HepG2 (cell line): ENCODE measurements at regions of chr4 and their contacts with region 1.

Region 1: GRCh38 chr4:103046416-103047290 is 27.1 kb upstream of the SLC9B1 start:
- DNase-seq: peak; percentile 50
- ATAC-seq: peak; percentile 99
- H3K4me3 ChIP-seq: no peak overlapping the region
- H3K27ac ChIP-seq: no peak overlapping the region
- H3K4me1 ChIP-seq: peaks cover 2% of the 10 kb centered on the region
- H3K27me3 ChIP-seq: no peaks in the 10 kb centered on the region
- CTCF ChIP-seq: peak; percentile 72
- EP300 ChIP-seq: no peak
- POLR2A ChIP-seq: no peak
- RAD21 ChIP-seq: peak; percentile 60; the same call in 1 of the 2 replicates

Region 2: GRCh38 chr4:102362922-102363432 is 683.7 kb before region 1 on chr4:
- CTCF ChIA-PET with region 1: no interaction called
- POLR2A ChIA-PET with region 1: no interaction called
- in situ Hi-C with region 1: no loop called
- intact Hi-C with region 1: no loop called
- DNase-seq: no peak
- ATAC-seq: no peak
- H3K4me3 ChIP-seq: no peak overlapping the region
- H3K27ac ChIP-seq: no peak overlapping the region
- H3K4me1 ChIP-seq: no peaks in the 10 kb centered on the region
- H3K27me3 ChIP-seq: no peaks in the 10 kb centered on the region
- CTCF ChIP-seq: no peak
- EP300 ChIP-seq: no peak
- POLR2A ChIP-seq: no peak
- RAD21 ChIP-seq: no peak

Region 3: GRCh38 chr4:103091601-103092223 is 45.1 kb after region 1 on chr4:
- CTCF ChIA-PET with region 1: interaction called, 35 read pairs
- POLR2A ChIA-PET with region 1: no interaction called
- in situ Hi-C with region 1: loop called (anchors 5 kb)
- intact Hi-C with region 1: loop called (anchors 1 kb)
- DNase-seq: peak; percentile 72
- ATAC-seq: peak; percentile 68
- H3K4me3 ChIP-seq: no peak overlapping the region
- H3K27ac ChIP-seq: no peak overlapping the region
- H3K4me1 ChIP-seq: peaks cover 15% of the 10 kb centered on the region
- H3K27me3 ChIP-seq: no peaks in the 10 kb centered on the region
- CTCF ChIP-seq: peak; percentile 80
- EP300 ChIP-seq: no peak
- POLR2A ChIP-seq: no peak
- RAD21 ChIP-seq: peak; percentile 77

Region 4: DNA sequence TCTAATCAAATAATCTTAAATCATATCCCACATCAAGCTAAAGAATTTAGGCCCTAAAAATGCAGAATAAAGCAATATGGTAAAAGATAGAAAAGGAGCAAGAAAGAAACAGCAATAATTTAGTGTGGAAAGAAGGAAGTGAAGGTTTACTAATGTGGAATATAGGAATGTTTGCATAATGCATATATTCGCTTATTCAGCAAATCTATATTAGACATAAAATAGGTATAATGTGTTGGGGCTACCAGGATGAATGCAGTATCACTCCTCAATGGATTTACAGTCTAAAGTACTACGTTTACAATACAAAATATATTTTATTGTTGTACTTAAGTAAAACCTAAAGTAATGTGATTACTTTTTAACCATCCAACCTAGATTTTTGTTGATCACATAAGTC is 146.8 kb after region 1 on chr4:
- CTCF ChIA-PET with region 1: no interaction called
- POLR2A ChIA-PET with region 1: no interaction called
- in situ Hi-C with region 1: no loop called
- intact Hi-C with region 1: no loop called
- DNase-seq: no peak
- ATAC-seq: no peak
- H3K4me3 ChIP-seq: no peak overlapping the region
- H3K27ac ChIP-seq: no peak overlapping the region
- H3K4me1 ChIP-seq: peaks cover 15% of the 10 kb centered on the region
- H3K27me3 ChIP-seq: no peaks in the 10 kb centered on the region; a peak in 1 of 5 replicates
- CTCF ChIP-seq: no peak
- EP300 ChIP-seq: no peak
- POLR2A ChIP-seq: no peak
- RAD21 ChIP-seq: no peak